Activated naive CD4-positive, alpha-beta T cell treated with anti-CD3 and anti-CD28 coated beads, Interleukin-2, amount 10 ng/mL, durations not matched to agents 7 days and 5 days (primary cell): ENCODE measurements at regions of chr10 and their contacts with region 1.

Region 1: GRCh38 chr10:116765547-116766162 is 23.3 kb upstream of the HSPA12A start:
- DNase-seq: peak; percentile 70
- H3K4me3 Mint-ChIP-seq: no peak overlapping the region
- H3K27ac Mint-ChIP-seq: no peak overlapping the region
- H3K4me1 Mint-ChIP-seq: no peaks in the 10 kb centered on the region
- H3K27me3 Mint-ChIP-seq: peaks cover 73% of the 10 kb centered on the region

Region 2: GRCh38 chr10:116683166-116683565 is 82.5 kb before region 1 on chr10:
- CTCF ChIA-PET with region 1: interaction called, 14 read pairs
- DNase-seq: no peak
- H3K4me3 Mint-ChIP-seq: no peak overlapping the region
- H3K27ac Mint-ChIP-seq: no peak overlapping the region
- H3K4me1 Mint-ChIP-seq: no peaks in the 10 kb centered on the region
- H3K27me3 Mint-ChIP-seq: peaks cover 30% of the 10 kb centered on the region

Region 3: GRCh38 chr10:117204316-117204715 is 438.7 kb after region 1 on chr10:
- CTCF ChIA-PET with region 1: no interaction called
- DNase-seq: peak; percentile 5
- H3K4me3 Mint-ChIP-seq: no peak overlapping the region
- H3K27ac Mint-ChIP-seq: no peak overlapping the region
- H3K4me1 Mint-ChIP-seq: no peaks in the 10 kb centered on the region
- H3K27me3 Mint-ChIP-seq: peaks cover 4% of the 10 kb centered on the region